Head of caudate nucleus (tissue), 42 donors: ENCODE measurements at regions of chr16 and their contacts with region 1.

Region 1: DNA sequence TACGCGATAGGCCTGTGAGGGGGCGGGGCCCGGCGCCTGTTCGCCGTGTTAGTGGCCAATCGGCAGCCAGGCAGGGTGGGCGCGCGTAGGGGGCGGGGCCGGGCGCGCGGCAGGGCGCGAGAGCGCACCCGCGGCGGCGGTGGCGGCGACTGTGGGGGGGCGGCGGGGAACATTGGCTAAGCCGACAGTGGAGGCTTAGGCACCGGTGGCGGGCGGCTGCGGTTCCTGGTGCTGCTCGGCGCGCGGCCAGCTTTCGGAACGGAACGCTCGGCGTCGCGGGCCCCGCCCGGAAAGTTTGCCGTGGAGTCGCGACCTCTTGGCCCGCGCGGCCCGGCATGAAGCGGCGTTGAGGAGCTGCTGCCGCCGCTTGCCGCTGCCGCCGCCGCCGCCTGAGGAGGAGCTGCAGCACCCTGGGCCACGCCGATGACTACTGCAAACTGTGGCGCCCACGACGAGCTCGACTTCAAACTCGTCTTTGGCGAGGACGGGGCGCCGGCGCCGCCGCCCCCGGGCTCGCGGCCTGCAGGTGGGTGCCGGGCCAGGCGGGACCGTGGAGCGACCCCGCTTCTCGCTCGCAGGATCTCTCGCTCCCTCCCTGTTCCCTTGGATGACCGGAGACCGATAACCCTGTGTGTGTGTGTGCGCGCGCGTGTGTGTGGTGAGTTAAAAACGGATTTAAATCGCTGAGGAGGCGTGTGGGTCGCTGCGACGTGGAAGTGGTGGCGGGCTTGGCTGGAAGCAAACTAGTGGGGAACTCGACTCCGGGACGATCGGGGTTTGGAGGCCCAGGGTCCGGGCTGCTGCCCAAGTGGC is at the start of gene NFATC3:
- DNase-seq: peak; percentile 95 to 99 (median 98)

Region 2: DNA sequence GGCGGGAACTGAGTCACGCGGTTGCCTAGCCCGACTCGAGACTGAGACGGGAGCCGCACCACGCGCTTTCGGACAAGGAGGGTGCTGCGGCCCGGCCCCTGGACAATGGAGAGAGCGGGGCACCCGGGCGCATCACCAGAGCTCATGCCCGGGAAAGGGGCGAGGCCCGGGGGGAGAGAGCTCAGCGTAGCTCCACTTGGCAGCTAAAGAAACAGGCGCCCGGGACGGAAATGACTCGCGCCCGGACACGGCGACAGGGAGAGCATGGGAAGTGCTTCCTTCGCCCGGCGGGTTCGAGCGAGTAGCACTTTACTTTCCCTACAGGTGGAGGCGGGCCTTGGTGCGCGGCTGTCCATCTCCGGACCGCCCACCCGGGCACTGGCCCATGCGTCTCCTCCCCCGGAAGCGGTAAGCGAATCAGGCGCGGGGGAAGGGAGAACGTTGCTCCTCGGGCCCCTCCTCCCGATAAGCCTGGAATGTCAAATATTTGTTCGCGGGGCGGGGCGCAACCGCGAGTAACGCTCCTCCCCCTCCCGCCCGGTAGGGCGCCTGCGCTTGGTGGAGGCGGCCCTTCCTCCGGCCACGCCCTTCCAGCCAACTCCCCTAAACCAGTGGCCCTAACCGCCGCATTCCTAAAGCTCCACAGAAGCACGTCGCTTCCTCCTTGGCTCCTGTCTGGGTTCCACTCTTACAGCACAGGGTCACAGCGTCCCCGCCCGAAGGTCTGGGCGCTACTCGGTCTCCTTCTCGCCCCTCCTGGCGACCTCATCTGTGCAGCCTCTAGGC is 152.0 kb after region 1 on chr16:
- intact Hi-C with region 1: loop called (anchors 5 kb)
- DNase-seq: peak; percentile 92 to 98 (median 96)

Region 3: DNA sequence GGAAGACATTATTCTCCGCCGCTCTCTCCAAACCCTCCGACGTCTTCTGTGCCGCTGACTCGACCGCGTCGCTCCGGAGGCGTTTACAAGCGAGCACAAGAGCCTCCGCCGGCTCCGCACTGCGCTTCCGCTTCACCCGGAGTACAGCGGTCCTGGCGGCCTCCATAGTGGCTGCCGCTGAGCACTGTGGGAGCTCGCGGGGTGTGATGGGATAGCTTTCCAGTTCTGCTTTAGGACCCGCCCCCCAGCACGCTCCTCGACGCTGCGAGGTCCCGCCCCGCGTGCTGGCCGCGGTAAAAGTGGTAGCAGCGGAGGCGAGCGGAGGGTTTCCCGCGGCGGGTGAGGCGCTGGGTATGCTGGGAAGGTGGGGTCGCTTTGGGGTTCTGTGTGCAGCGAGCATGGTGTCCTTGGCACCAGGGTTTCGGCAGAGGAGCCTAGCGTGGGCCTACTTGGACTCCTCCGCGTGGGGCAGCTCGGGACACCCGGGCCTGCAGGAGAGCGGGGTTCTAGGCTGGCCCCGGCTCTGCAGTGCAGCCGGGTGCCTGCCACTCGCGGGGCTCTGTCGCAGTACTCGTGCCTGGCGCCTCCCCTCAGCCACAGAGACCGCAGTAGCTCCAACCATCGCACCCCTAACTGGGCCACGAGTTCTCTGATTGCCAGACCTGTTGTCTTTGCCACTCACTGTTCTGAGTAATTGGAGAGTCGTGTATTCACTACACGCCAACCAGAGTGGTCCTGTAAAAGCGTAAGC is 225.5 kb after region 1 on chr16 and contains the starts of genes PRMT7 and SLC7A6OS:
- intact Hi-C with region 1: loop called (anchors 10 kb)
- DNase-seq: peak; percentile 87 to 98 (median 94)